Esophagus muscularis mucosa (tissue), 4 donors: ENCODE measurements at regions of chr7 and their contacts with region 1.

Region 1: DNA sequence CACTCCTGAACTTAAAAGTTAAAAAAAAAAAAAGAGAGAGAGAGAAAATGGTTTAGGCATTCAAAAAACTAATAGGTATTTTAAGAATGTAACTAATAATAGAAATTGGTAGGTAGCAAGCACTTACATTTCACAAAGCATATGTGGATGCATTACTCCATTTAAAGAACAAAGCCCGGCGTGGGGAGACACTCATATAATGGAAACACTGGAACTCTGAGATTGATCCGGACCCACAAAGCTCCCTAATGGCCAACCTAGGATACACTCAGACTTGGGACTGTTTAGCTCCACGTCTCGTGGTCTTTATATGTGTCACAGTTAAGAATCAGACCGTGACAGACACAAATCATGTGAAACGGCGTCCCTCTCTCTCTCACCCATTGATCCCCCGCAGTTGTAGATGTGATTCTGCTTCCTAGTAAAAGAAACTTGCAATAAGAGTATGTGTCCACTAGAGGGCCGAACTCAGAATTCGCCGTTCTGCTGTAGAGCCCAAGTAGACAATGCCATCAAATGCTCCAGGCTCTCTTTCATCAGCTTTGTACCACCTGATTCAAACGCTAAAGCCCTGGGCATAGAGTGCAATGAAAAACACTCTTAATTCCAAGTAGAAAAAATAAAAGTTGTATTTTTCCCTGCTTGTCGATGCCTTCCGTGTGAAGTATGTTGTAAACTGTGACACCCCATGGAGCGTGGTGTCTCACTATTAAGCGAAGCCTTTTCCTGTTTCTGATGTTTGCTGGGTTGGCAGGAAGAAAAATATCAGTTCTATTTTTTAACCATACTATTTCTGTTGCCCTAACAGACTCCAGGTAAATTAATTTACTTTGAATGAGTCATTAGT is 429.0 kb upstream of the MTPN start:
- DNase-seq: no peak
- H3K4me3 ChIP-seq: no peak overlapping the region
- H3K27ac ChIP-seq: no peak overlapping the region
- H3K4me1 ChIP-seq: peaks cover 0 to 8% (median 5%) of the 10 kb centered on the region in 4 donors
- H3K27me3 ChIP-seq: no peaks in the 10 kb centered on the region
- CTCF ChIP-seq: peak; percentile 46 to 85 (median 66)
- EP300 ChIP-seq: no peak
- POLR2A ChIP-seq: no peak

Region 2: GRCh38 chr7:135710417-135711138 is 695.6 kb before region 1 on chr7:
- intact Hi-C with region 1: no loop called
- DNase-seq: no peak
- H3K4me3 ChIP-seq: no peak overlapping the region
- H3K27ac ChIP-seq: no peak overlapping the region
- H3K4me1 ChIP-seq: peaks cover 0 to 5% (median 2%) of the 10 kb centered on the region in 4 donors
- H3K27me3 ChIP-seq: peaks cover 0 to 5% (median 0%) of the 10 kb centered on the region in 4 donors
- CTCF ChIP-seq: peak in 2 of 3 experiments; percentile 33 to 63
- EP300 ChIP-seq: no peak
- POLR2A ChIP-seq: no peak

Region 3: DNA sequence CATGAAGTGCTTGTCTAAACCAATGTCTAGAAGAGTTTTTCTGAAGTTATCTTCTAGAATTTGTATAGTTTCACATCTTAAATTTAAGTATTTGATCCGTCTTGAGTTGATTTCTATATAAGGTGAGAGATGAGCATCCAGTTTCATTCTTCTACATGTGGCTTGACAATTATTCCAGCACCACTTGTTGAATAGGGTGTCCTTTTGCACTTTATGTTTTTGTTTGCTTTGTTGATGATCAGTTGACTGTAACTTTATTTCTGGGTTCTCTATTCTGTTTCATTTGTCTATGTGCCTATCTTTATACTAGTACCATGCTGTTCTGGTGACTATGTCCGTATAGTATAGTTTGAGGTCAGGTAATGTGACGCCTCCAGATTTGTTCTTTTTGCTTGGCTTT is 35.7 kb after region 1 on chr7:
- intact Hi-C with region 1: no loop called
- DNase-seq: no peak
- H3K4me3 ChIP-seq: no peak overlapping the region
- H3K27ac ChIP-seq: no peak overlapping the region
- H3K4me1 ChIP-seq: no peaks in the 10 kb centered on the region
- H3K27me3 ChIP-seq: no peaks in the 10 kb centered on the region
- CTCF ChIP-seq: no peak
- EP300 ChIP-seq: no peak
- POLR2A ChIP-seq: no peak

Region 4: DNA sequence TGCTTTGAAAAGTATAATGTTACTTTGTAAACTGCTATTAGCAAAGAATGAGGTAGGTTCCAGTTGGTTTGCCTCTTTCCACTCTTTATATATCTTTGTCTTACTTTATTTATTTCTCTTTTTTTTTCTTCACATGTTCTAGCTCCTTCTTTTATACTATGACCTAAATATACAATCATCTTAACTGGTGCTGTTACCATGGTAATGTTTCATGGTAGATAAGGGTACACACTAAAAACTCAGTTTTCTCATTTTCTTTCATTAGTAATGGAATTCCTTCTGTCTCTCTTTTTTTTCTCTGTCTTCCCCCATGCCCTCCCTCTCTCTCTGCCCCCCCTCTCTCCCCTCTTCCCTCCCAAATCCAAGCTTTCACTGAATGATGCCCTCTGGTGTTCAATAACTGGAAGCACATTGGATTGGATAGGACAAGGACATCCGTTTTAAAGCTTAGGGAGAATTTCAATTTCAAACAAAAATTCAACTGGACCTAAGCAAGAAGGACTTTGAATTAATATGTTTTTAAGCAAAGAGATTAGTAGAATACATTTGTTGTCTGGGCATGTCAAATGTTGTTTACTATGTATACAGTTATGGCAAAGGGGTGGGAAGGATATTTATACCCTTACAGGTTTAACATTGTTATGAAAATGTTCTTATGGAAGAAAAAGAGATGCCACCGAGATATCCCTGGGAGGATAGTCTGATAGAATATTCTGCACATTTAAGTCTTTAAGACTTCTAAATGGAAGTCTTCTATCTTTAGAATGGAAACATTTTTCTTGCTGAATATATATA is 468.3 kb after region 1 on chr7:
- intact Hi-C with region 1: loop called (anchors 10 kb)
- DNase-seq: no peak
- H3K4me3 ChIP-seq: no peak overlapping the region
- H3K27ac ChIP-seq: no peak overlapping the region
- H3K4me1 ChIP-seq: peaks cover 3 to 45% (median 28%) of the 10 kb centered on the region in 4 donors
- H3K27me3 ChIP-seq: peaks cover 0 to 21% (median 6%) of the 10 kb centered on the region in 4 donors
- CTCF ChIP-seq: peak in 1 of 3 experiments; percentile 39
- EP300 ChIP-seq: no peak
- POLR2A ChIP-seq: no peak